Motor neuron (in vitro differentiated cells): ENCODE measurements at regions of chr5 and their contacts with region 1.

Region 1: GRCh38 chr5:94968507-94969095 is 316.3 kb downstream of the MCTP1 start:
- ATAC-seq: peak; percentile 40 to 82 (median 63)
- H3K4me3 ChIP-seq: no peak overlapping the region
- H3K27ac ChIP-seq: no peak overlapping the region
- H3K4me1 ChIP-seq: peaks cover 0 to 9% of the 10 kb centered on the region in 2 donors

Region 2: DNA sequence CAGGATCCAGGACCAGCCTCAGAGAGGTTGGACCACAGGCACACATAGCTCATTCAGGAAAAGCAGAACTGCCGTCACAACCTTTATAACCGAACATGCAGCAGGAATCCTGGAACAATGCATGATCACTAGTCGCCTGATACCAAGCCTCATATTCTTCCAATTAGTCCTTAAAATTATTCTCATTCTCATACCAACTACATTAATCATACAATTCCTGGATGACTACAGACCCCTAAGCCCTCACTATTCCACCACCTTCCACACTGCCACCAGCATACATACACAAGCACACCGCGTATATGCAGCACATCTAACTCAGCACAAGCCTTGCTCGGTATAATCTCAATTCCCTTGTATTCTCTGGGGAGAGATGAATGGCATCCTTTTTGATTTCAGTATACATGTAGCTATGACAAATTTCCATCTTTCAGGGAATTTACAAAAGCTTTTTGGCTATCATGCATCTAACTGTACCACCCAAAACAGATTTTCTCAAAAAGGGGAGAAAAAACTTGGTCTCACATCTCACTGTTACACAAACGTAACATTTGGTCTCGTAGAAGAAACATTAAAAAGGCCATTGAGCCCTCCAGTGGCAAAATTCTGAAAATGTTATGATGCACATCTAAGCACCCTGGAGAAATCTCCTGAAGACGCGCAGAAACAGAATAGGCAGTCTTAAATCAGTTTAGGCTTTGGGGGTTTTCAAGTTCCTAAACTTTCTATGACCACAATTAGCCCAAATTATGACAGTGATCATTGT is 270.1 kb after region 1 on chr5:
- in situ Hi-C with region 1: loop called in 1 of 9 experiments (anchors 10 kb)
- ATAC-seq: peak in 3 of 8 experiments; percentile 65 to 82 (median 80)
- H3K4me3 ChIP-seq: no peak overlapping the region
- H3K27ac ChIP-seq: no peak overlapping the region
- H3K4me1 ChIP-seq: no peaks in the 10 kb centered on the region

Region 3: DNA sequence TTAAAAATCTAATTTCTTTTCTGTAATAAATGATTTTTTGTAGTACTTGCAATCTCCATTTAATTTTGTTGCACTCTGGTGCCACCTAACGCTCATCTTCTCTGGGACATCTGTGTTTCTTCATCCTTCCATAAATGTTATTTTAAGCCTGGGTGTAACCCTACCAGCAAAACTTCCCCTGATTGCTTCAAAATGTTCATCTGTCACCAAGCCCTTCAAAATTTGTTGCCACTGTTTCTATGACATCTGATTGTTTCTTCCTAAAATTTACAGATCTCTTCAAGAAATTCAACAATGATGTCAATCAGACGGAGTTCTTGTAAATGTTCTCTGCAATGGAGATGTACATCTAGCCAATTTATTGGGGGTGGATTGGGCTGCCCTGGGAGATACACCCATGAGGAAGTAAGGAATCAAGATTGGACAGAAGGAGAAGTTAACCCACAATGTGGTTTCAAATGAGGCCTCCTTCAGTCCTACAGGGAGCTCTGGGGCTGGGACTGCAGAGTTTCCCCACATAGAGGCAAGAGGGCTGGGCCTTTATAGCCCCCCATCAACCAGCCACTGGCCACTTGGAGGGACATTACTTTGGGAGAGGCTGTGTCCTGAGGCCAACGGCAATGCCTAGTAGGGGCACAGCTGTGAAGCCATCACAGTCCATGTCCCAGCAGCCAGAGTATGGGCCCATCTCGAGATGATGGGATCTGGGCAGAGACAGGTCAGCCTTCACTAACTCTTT is 293.0 kb after region 1 on chr5:
- in situ Hi-C with region 1: loop called in 3 of 9 experiments (anchors 25 kb)
- ATAC-seq: peak in 3 of 8 experiments; percentile 90 to 96 (median 96)
- H3K4me3 ChIP-seq: no peak overlapping the region
- H3K27ac ChIP-seq: no peak overlapping the region
- H3K4me1 ChIP-seq: no peaks in the 10 kb centered on the region